Breast epithelium (tissue), 4 donors: ENCODE measurements at regions of chr14 and their contacts with region 1.

Region 1: GRCh38 chr14:99252940-99253868 is 18.8 kb downstream of the BCL11B start:
- DNase-seq: no peak
- H3K4me3 ChIP-seq: no peak overlapping the region
- H3K27ac ChIP-seq: no peak overlapping the region
- H3K4me1 ChIP-seq: no peaks in the 10 kb centered on the region
- H3K27me3 ChIP-seq: peaks cover 0 to 61% of the 10 kb centered on the region in 2 donors
- CTCF ChIP-seq: no peak
- POLR2A ChIP-seq: no peak

Region 2: GRCh38 chr14:97458661-97459579 is 1794.3 kb before region 1 on chr14:
- intact Hi-C with region 1: loop called (anchors 5 kb)
- DNase-seq: peak in 1 of 2 donors; percentile 19
- H3K4me3 ChIP-seq: peak overlapping the region; percentile 5 to 52 (median 37)
- H3K27ac ChIP-seq: no peak overlapping the region
- H3K4me1 ChIP-seq: no peaks in the 10 kb centered on the region
- H3K27me3 ChIP-seq: peaks cover 0 to 28% of the 10 kb centered on the region in 2 donors
- CTCF ChIP-seq: no peak
- POLR2A ChIP-seq: no peak